ENCODE measurements at regions of chrX and their contacts with region 1.

Region 1: DNA sequence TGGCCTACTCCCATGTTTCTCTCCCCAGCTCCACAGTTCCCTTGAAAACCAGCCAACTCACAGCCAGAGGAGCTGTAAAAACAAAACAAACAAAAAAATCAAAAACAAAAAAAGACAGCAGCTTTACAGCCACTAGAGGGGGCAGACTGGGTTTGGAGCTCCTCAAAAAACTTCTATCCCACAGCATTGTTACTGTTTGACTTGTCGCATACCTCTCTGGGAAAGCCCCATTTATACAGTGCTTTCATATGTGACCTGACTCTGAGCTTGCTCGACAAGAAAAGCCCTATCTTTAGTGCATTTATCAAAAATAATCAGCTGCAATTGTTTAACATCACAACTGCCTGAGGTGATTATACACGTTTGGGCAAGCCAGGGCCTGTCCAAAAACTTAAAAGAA is 21.6 kb downstream of the TSPAN6 start:
- DNase-seq: peak; percentile 74
- H3K4me3 ChIP-seq: no peak overlapping the region
- H3K27ac ChIP-seq: no peak overlapping the region
- H3K4me1 ChIP-seq: peaks cover 2% of the 10 kb centered on the region
- H3K27me3 ChIP-seq: no peaks in the 10 kb centered on the region
- CTCF ChIP-seq: peak; percentile 46 to 60
- POLR2A ChIP-seq: no peak

Region 2: DNA sequence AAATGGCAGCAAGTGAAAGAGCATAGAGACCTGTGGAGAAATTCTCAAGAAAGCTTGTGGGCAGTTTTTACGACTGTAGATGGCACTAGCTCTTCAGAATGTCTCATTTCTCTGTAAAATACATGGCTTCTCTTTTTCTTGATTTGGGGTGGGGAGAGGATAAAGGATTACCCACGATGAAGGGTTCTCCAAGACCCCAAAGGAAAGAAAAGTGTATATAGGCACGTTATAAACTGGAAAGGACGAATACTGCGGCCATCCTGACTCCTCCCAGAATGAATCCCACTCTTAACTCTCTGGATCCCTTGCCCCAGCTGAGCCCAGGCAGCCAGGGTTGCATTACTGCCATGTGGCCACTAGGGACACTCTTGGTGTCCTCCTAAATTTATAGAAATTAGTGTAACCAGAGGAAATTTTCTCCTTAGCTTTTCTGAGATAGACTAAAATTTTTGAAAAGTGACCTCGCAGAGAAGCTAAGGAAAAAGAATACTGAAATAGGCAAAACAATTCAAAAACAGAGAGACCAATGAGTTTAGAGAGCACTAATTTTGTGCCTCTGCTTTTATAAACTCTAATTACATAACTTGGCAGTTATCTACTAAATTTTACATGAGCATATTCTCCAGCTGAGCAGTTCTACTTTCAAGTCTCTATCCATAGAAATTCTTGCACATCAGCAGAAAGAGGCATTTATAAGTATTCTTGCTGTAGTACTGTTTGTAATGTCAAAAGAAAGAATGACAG is 167.2 kb before region 1 on chrX:
- CTCF ChIA-PET with region 1: interaction called, 20 read pairs
- POLR2A ChIA-PET with region 1: no interaction called
- dilution Hi-C with region 1: no loop called
- intact Hi-C with region 1: no loop called
- DNase-seq: peak; percentile 59
- H3K4me3 ChIP-seq: no peak overlapping the region
- H3K27ac ChIP-seq: no peak overlapping the region
- H3K4me1 ChIP-seq: peaks cover 11% of the 10 kb centered on the region
- H3K27me3 ChIP-seq: no peaks in the 10 kb centered on the region
- CTCF ChIP-seq: peak; percentile 60 to 64
- POLR2A ChIP-seq: no peak

Region 3: GRCh38 chrX:100512471-100512870 is 102.5 kb before region 1 on chrX:
- CTCF ChIA-PET with region 1: interaction called, 27 read pairs
- POLR2A ChIA-PET with region 1: no interaction called
- dilution Hi-C with region 1: no loop called
- intact Hi-C with region 1: loop called (anchors 5 kb)
- DNase-seq: peak; percentile 9
- H3K4me3 ChIP-seq: no peak overlapping the region
- H3K27ac ChIP-seq: no peak overlapping the region
- H3K4me1 ChIP-seq: no peaks in the 10 kb centered on the region
- H3K27me3 ChIP-seq: no peaks in the 10 kb centered on the region
- CTCF ChIP-seq: peak; percentile 8 to 16
- POLR2A ChIP-seq: no peak

Region 4: DNA sequence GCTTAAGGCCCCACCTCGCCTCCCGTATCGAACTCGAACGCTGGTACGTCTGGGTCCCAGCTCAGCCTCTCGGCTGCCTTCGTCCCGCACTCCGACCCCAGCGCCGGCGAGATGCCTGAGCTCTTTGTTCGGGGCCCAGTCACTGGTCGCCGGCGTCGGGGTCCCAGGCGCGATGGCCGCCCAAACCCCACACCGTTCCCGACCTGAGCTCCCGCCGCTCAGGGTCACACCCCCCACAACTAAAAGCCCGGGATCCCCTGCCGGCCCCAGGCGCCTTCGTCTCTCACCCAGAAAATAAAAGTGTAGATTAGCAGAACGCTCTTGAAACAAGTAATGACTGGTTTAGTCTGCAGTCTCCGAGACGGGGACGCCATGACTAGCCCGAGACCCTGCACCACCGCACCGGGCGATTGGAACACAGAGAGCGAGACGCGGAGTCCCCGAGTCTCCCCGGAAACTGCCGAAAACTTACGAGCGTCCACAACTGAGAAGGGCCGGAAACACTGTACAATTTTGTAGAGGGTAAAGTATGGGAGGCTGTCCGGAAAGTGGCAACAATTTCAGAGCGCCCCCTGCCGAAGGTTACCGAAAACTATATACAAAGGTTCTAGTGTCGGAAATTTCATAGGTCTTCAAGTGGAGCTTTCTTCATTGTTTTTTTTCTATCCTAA is 21.5 kb after region 1 on chrX and contains the start of gene TSPAN6:
- CTCF ChIA-PET with region 1: interaction called, 26 read pairs
- POLR2A ChIA-PET with region 1: interaction called, 7 read pairs
- dilution Hi-C with region 1: no loop called
- intact Hi-C with region 1: loop called (anchors 2 kb)
- DNase-seq: peak; percentile 84
- H3K4me3 ChIP-seq: peak within 1 kb of the TSS; percentile 69 to 86 (median 81)
- H3K27ac ChIP-seq: peak within 1 kb of the TSS; percentile 78
- H3K4me1 ChIP-seq: peaks cover 4% of the 10 kb centered on the region
- H3K27me3 ChIP-seq: no peaks in the 10 kb centered on the region
- CTCF ChIP-seq: peak; percentile 41 to 55
- POLR2A ChIP-seq: peak; percentile 25
- total RNA-seq, gene TSPAN6: 43.1 and 44.6 TPM in 2 replicates

Region 5: DNA sequence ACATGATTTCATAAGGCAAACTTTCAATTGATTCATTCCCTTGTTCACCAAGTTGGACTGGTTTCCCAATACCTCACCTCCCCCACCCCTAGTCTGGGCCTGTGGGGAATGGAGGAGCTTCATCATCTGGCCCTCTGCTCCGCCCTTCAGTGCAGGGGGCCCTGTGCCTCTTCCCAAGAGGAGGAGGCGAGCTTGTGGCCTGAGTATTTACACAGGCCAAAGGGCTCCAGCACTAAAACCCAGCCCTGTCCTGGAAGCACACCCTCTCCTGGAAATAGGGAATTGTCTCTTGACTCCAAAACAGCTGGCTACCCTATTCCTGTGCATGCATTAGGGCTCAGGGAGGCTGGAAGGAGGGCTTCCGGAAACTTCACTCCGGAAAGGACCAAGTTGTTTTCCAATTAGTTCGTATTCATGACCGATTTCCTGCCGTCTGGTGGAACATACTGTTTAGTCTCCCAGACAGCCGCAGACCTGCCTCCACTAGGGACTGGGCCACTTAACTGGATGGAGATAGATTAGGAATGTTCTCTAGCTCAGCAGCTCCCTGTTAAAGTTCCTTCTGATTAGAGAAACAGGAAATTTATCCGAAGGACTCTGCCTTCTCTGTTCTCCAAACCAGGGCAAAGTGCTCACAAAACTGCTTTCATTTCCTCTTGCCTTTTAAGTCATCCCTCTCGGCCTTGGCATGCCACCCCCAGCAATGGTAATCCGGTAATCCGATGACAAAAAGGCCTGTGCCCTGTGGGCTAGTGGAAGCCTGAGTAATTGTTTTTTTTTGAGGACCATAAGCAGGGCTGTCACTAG is 34.7 kb after region 1 on chrX:
- CTCF ChIA-PET with region 1: interaction called, 10 read pairs
- POLR2A ChIA-PET with region 1: no interaction called
- dilution Hi-C with region 1: no loop called
- intact Hi-C with region 1: loop called (anchors 1 kb)
- DNase-seq: peak; percentile 93
- H3K4me3 ChIP-seq: peak overlapping the region in 1 of 3 experiments; percentile 22
- H3K27ac ChIP-seq: peak overlapping the region; percentile 99
- H3K4me1 ChIP-seq: peaks cover 75% of the 10 kb centered on the region
- H3K27me3 ChIP-seq: no peaks in the 10 kb centered on the region
- CTCF ChIP-seq: no peak
- POLR2A ChIP-seq: peak; percentile 57

Measured in endothelial cell of umbilical vein (primary cell).